Right cardiac atrium (tissue), 5 donors: ENCODE measurements at regions of chr1 and their contacts with region 1.

Region 1: DNA sequence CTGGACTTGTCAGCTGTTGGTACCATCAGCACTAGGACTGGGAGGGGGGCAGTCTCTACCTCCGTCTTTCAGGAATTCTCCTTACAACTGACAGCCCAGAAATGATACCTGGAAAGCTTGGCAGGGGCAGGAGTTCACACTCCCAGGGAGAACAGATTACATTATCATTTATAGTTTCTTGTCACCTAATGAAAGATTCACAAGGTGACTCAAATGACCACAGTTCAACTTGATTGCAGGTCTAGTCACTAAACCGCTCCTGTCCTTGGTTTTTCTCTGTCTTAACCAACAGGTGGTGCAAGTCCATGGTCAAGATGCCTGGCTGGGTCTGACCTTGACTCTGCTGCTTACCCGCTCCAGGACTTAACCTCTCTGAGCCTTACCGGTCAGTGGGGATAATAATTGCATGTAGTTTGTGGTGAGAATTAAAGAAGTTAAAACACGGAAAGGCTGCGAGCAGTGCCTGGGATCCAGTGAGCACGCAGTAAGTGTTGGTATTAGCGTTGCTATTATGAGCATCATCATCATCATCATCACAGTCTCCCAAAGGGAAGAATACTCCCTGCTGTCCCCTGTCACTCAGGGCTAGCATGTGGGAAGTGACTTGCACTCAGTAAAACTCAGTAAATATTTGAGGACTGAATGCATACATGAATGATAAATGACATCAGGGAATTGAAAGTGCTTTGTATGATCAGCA is 125.3 kb upstream of the CD34 start:
- DNase-seq: no peak
- ATAC-seq: no peak
- H3K4me3 ChIP-seq: no peak overlapping the region
- H3K27ac ChIP-seq: no peak overlapping the region
- H3K4me1 ChIP-seq: no peaks in the 10 kb centered on the region
- H3K27me3 ChIP-seq: no peaks in the 10 kb centered on the region

Region 2: DNA sequence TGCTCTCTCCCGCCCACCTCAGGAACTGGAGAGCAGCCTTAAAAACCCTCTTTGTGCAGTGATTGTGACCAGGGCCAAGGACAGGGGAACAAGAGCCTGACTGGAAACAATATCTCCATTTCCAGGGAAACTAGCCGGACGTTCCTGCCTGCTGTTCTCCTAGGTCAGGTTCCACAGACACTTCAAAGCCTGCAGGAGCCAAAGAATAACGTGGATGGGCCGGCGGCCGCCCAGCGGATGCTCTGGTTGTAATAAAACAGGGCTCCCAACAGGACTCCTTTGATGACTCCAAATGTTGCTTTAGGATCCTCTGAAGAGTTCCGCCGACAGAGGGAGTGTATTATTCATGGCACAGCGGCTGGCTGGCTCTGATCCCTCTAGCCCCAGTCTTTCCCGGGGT is 45.7 kb after region 1 on chr1:
- intact Hi-C with region 1: loop called in 1 of 4 experiments (anchors 10 kb)
- DNase-seq: peak in 1 of 3 donors; percentile 65
- ATAC-seq: peak in 1 of 2 donors; percentile 53
- H3K4me3 ChIP-seq: no peak overlapping the region
- H3K27ac ChIP-seq: no peak overlapping the region
- H3K4me1 ChIP-seq: no peaks in the 10 kb centered on the region
- H3K27me3 ChIP-seq: no peaks in the 10 kb centered on the region